ENCODE measurements at regions of chr20 and their contacts with region 1.

Region 1: DNA sequence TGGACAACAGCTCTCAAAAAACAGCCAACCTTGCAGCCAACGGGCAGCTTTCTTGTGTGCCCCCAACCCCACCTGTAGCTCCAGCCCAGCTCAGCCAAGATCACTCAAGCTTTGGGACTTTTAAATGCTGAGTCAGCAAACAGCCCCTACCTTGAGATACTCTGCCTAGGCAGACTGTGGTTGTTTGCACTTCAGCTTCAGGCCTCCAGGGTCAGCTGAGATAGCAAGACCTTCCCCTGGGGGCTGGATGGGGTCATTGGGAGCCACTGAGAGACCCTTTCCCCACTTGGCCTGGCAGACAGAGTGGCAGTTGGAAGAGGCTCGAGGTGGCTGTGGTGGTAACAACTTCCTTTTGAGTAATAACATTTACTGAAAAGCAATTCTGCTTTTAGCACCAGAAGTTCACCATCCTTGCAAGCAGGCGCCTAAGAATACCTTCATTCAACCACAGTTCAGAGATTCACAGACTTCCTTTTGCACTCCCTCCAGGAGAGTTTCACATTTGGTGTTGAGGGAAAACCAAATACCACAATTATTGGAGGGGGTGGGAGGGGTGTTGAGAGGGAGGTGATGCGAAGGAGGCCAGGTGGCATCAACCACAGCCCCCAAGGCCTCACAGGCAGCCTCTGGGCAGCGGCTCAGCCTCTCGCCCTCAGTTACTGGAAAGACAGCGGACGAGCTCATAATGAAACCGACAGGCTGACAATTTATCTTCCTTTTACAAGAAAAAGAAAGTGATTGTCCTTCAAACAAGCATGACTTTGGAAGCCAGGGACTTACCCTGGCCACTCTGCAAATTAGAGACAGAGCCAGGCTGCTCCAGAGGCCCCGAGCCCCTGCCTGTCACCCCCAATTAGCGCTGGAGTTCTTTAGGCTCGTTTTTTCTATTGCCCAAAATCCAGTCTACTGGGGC is 148.1 kb downstream of the CEBPB start:
- DNase-seq: no peak
- H3K4me3 ChIP-seq: no peak overlapping the region
- H3K27ac ChIP-seq: no peak overlapping the region
- H3K4me1 ChIP-seq: peaks cover 0 to 5% (median 1%) of the 10 kb centered on the region in 4 experiments; a peak in 3 of 7 replicates
- H3K27me3 ChIP-seq: no peaks in the 10 kb centered on the region; a peak in 1 of 7 replicates
- CTCF ChIP-seq: peak; percentile 26 to 53 (median 45)
- EP300 ChIP-seq: no peak
- POLR2A ChIP-seq: no peak
- RAD21 ChIP-seq: peak; percentile 6 to 37; a peak in 2 of 4 replicates

Region 2: DNA sequence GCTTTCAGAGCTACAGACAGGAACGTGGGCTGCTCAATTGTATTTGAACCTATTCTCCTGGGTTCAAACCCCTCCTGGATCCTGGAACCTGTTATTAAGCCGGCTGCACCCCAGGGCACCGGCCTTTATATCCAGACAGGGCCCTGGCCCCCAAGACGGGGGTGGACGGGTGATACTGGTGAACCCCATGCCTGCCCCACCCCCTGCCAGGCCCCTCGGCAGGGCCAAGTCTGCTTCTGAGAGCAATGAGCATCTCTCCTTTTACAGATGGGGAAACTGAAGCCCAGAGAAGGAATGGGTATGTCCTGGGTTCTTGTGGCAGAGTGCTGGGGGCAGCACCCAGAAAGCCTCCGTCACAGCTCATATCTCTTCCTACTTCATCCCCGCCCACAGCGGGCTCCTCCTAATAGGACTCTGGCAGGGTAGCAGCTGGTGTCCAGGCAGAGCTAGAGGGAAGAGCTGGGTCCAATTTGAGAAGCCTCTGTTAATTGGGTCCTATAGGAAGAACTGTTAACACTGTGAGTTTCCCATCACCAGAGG is 41.8 kb before region 1 on chr20:
- CTCF ChIA-PET with region 1: no interaction called
- POLR2A ChIA-PET with region 1: no interaction called
- DNase-seq: no peak
- H3K4me3 ChIP-seq: no peak overlapping the region
- H3K27ac ChIP-seq: no peak overlapping the region
- H3K4me1 ChIP-seq: peaks cover 0 to 4% (median 0%) of the 10 kb centered on the region in 4 experiments; a peak in 4 of 7 replicates
- H3K27me3 ChIP-seq: no peaks in the 10 kb centered on the region
- CTCF ChIP-seq: no peak
- EP300 ChIP-seq: no peak
- POLR2A ChIP-seq: no peak
- RAD21 ChIP-seq: no peak

Region 3: GRCh38 chr20:50320910-50321796 is 17.6 kb before region 1 on chr20:
- CTCF ChIA-PET with region 1: interaction called, 10 read pairs
- POLR2A ChIA-PET with region 1: no interaction called
- DNase-seq: peak; percentile 59 to 90
- H3K4me3 ChIP-seq: no peak overlapping the region
- H3K27ac ChIP-seq: no peak overlapping the region
- H3K4me1 ChIP-seq: peaks cover 0 to 12% (median 7%) of the 10 kb centered on the region in 4 experiments; a peak in 5 of 7 replicates
- H3K27me3 ChIP-seq: no peaks in the 10 kb centered on the region
- CTCF ChIP-seq: no peak
- EP300 ChIP-seq: no peak
- POLR2A ChIP-seq: no peak; a peak in 1 of 3 replicates
- RAD21 ChIP-seq: no peak; a peak in 1 of 4 replicates